AG04449 (cell line): ENCODE measurements at regions of chr5 and their contacts with region 1.

Region 1: GRCh38 chr5:15003511-15003920 is 131.9 kb upstream of the ANKH start:
- DNase-seq: no peak
- H3K4me3 ChIP-seq: no peak overlapping the region
- CTCF ChIP-seq: peak; percentile 70

Region 2: GRCh38 chr5:14685757-14686156 is 317.8 kb before region 1 on chr5:
- CTCF ChIA-PET with region 1: interaction called, 148 read pairs
- POLR2A ChIA-PET with region 1: no interaction called
- DNase-seq: no peak
- H3K4me3 ChIP-seq: no peak overlapping the region
- CTCF ChIP-seq: peak; percentile 63

Region 3: DNA sequence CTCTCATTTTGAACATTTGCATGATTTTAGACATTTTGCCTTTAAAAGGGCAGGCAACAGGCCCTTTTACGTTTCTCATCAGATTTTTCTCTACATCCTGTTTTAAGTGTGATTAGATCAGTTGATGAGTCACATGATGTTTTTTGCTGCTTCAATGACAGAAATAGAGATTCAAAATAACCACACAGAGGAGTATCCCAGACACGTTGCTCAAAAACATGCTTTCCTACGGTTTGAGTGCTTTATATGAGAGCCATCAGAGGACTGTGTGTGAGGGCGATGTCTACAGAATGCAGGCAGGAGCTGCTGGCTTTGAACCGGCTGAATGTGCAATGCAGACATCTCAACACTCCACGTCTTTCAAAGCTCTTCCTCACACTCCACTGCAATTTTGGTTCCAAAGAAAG is 296.9 kb before region 1 on chr5:
- CTCF ChIA-PET with region 1: interaction called, 19 read pairs
- POLR2A ChIA-PET with region 1: no interaction called
- DNase-seq: peak; percentile 41
- H3K4me3 ChIP-seq: no peak overlapping the region
- CTCF ChIP-seq: no peak

Region 4: DNA sequence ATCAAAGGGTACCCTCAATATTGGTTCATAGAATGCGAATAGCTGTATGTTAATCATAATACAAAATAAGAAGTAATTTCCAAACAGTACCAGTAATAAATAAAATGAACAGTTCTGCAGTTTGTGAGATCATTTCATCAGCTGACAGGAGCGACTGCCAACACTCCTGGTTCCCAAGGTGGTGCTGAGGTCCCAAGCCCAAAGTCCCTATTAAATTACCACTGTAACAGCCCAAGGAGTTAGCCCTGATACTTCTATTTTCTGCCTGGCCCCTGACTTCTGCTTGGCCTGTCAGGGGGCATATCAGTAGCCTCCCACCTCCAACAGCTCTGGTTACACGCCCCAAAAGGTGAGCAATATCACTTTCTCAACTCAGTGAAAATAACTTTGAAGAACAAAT is 179.0 kb before region 1 on chr5:
- CTCF ChIA-PET with region 1: interaction called, 11 read pairs
- POLR2A ChIA-PET with region 1: no interaction called
- DNase-seq: no peak
- H3K4me3 ChIP-seq: no peak overlapping the region
- CTCF ChIP-seq: no peak

Region 5: GRCh38 chr5:14879937-14880589 is 123.5 kb before region 1 on chr5:
- CTCF ChIA-PET with region 1: interaction called, 15 read pairs
- POLR2A ChIA-PET with region 1: no interaction called
- DNase-seq: no peak
- H3K4me3 ChIP-seq: no peak overlapping the region
- CTCF ChIP-seq: no peak

Region 6: GRCh38 chr5:14988223-14988622 is 15.3 kb before region 1 on chr5:
- CTCF ChIA-PET with region 1: interaction called, 29 read pairs
- POLR2A ChIA-PET with region 1: no interaction called
- DNase-seq: no peak
- H3K4me3 ChIP-seq: no peak overlapping the region
- CTCF ChIP-seq: no peak

Region 7: GRCh38 chr5:15203376-15203775 is 199.9 kb after region 1 on chr5:
- CTCF ChIA-PET with region 1: no interaction called
- POLR2A ChIA-PET with region 1: no interaction called
- DNase-seq: no peak
- H3K4me3 ChIP-seq: no peak overlapping the region
- CTCF ChIP-seq: no peak